Heart left ventricle (tissue), 16 donors: ENCODE measurements at regions of chr18 and their contacts with region 1.

Region 1: GRCh38 chr18:36572135-36572856 is 256.5 kb downstream of the TPGS2 start:
- DNase-seq: peak in 1 of 5 donors; percentile 39
- ATAC-seq: peak; percentile 53 to 77 (median 69)
- H3K4me3 ChIP-seq: no peak overlapping the region
- H3K27ac ChIP-seq: peak overlapping the region in 6 of 12 donors; percentile 6 to 45 (median 24)
- H3K4me1 ChIP-seq: peaks cover 0 to 17% (median 0%) of the 10 kb centered on the region in 12 donors
- H3K27me3 ChIP-seq: peaks cover 0 to 2% (median 0%) of the 10 kb centered on the region in 9 donors
- CTCF ChIP-seq: peak; percentile 11 to 67 (median 51)
- POLR2A ChIP-seq: no peak

Region 2: GRCh38 chr18:36186911-36187834 is 385.1 kb before region 1 on chr18 and contains the start of gene MOCOS:
- intact Hi-C with region 1: loop called in 2 of 10 experiments (anchors 5 to 10 kb)
- DNase-seq: peak; percentile 79 to 87 (median 81)
- ATAC-seq: peak; percentile 75 to 97 (median 92)
- H3K4me3 ChIP-seq: peak within 1 kb of the TSS; percentile 41 to 96 (median 68)
- H3K27ac ChIP-seq: peak within 1 kb of the TSS in 3 of 12 donors; percentile 36 to 51 (median 46)
- H3K4me1 ChIP-seq: peaks cover 0 to 24% (median 4%) of the 10 kb centered on the region in 12 donors
- H3K27me3 ChIP-seq: peaks cover 0 to 12% (median 0%) of the 10 kb centered on the region in 9 donors
- CTCF ChIP-seq: no peak
- POLR2A ChIP-seq: no peak
- total RNA-seq, gene MOCOS: 0.07 to 1.0 (median 0.25) TPM

Region 3: GRCh38 chr18:36372903-36373311 is 199.4 kb before region 1 on chr18:
- intact Hi-C with region 1: loop called in 1 of 10 experiments (anchors 10 kb)
- DNase-seq: peak in 1 of 5 donors; percentile 34
- ATAC-seq: peak in 3 of 4 donors; percentile 37 to 74 (median 56)
- H3K4me3 ChIP-seq: no peak overlapping the region
- H3K27ac ChIP-seq: peak overlapping the region in 7 of 12 donors; percentile 4 to 68 (median 27)
- H3K4me1 ChIP-seq: peaks cover 0 to 71% (median 11%) of the 10 kb centered on the region in 12 donors
- H3K27me3 ChIP-seq: peaks cover 0 to 2% (median 0%) of the 10 kb centered on the region in 9 donors
- CTCF ChIP-seq: peak in 3 of 12 donors; percentile 11 to 23 (median 12)
- POLR2A ChIP-seq: no peak

Region 4: DNA sequence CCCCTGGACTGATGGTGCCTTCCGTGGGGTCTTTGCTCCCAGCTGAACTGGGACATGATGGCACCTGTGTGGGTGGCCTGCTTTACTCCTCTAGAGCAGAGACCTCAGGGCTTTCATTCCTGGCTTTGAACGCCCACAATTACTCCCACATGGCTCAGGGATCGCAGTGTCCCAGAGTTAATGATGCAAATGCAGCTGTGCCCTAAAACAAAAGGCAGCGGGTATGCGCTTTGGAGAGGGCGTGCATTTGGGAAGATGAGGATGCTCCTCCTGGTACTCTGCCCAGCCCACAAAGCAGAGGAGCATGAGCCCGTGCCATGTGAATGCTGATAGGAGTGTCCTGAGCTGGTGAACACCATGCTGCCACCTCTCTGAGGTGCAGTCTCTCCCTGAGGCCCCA is 101.4 kb before region 1 on chr18:
- intact Hi-C with region 1: loop called in 6 of 10 experiments (anchors 2 to 10 kb)
- DNase-seq: no peak
- ATAC-seq: no peak
- H3K4me3 ChIP-seq: no peak overlapping the region
- H3K27ac ChIP-seq: peak overlapping the region in 10 of 12 donors; percentile 6 to 97 (median 84)
- H3K4me1 ChIP-seq: peaks cover 0 to 69% (median 27%) of the 10 kb centered on the region in 12 donors
- H3K27me3 ChIP-seq: no peaks in the 10 kb centered on the region
- CTCF ChIP-seq: no peak
- POLR2A ChIP-seq: no peak

Region 5: GRCh38 chr18:36519358-36519757 is 52.9 kb before region 1 on chr18:
- intact Hi-C with region 1: loop called in 1 of 10 experiments (anchors 10 kb)
- DNase-seq: no peak
- ATAC-seq: peak in 3 of 4 donors; percentile 29 to 61 (median 33)
- H3K4me3 ChIP-seq: no peak overlapping the region
- H3K27ac ChIP-seq: peak overlapping the region in 8 of 12 donors; percentile 3 to 67 (median 41)
- H3K4me1 ChIP-seq: peaks cover 0 to 50% (median 18%) of the 10 kb centered on the region in 12 donors
- H3K27me3 ChIP-seq: no peaks in the 10 kb centered on the region
- CTCF ChIP-seq: no peak
- POLR2A ChIP-seq: no peak